Posterior cingulate gyrus (tissue), 11 donors: ENCODE measurements at regions of chr18 and their contacts with region 1.

Region 1: GRCh38 chr18:45690975-45691815 is 32.8 kb upstream of the SLC14A1 start:
- DNase-seq: peak; percentile 55 to 96 (median 81)

Region 2: GRCh38 chr18:45621061-45621511 is 70.1 kb before region 1 on chr18:
- intact Hi-C with region 1: no loop called
- DNase-seq: peak in 6 of 10 donors; percentile 19 to 87 (median 32)

Region 3: DNA sequence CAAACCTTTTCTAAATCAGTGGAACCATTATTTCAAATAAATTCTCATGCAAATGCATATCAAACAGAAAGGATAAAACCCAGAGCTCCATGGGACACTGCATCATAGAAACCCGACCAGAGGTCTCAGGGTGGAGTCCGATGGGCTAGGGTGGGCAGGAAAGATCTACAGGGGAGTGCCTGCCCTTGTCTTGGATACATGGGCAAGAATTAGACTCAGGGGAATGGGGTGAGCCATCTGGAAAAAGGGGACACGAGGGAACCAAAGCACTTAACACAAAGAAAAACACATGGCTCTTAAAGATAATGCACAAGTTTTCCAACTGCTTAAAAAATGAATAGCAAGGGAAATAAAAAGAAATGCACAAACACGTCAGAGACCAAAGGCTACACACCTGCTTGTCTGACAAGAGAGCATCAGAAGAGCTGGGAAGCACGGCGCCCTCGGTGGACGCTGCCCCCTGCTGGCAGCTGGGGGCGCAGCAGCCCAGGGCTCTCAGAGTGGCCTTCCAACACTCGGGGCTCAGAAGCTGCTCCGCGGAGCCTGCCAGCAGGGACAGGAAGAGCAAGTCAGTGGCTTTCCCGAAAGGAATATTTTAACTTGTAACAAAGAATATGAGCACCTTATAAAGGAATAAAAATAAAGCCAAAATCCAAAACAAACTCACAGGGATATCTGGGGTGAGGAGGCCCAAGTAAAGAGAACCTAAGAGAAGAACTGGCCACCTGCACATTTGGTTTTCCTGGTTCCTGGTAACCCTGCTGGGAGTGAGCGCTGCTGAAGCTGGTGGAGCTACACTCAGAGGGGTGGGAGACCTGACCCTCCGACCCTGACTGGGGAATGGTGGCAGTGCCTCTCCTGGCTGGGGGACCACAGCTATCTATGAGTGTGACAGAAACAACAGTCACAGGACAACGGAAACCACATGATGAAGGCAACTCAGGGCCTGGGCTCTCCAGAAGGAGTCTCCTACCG is 188.8 kb after region 1 on chr18:
- intact Hi-C with region 1: loop called (anchors 2 kb)
- DNase-seq: peak; percentile 31 to 95 (median 66)